HEK293 (cell line): ENCODE measurements at regions of chrX and their contacts with region 1.

Region 1: GRCh38 chrX:19017271-19017670 is 33.4 kb upstream of the PHKA2 start:
- H3K4me3 ChIP-seq: no peak overlapping the region
- H3K27ac ChIP-seq: no peak overlapping the region
- H3K4me1 ChIP-seq: no peaks in the 10 kb centered on the region
- CTCF ChIP-seq: peak; percentile 30

Region 2: DNA sequence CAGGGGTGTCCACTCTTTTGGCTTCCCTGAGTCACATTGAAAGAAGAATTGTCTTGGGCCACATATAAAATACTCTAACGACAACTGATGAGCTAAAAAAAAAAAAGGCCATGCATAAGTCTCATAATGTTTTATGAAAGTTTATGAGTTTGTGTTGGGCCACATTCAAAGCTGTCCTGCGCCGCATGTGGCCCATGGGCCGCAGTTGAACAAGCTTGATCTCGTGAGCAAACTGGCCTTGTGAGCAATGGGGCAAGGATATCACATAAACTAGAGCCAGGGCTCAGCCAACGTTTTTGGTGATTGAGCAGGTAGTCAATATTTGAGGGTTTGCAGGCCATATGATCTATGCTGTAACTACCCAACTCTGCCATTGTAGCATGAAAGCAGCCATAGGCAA is 11.3 kb after region 1 on chrX:
- CTCF ChIA-PET with region 1: interaction called, 18 read pairs
- POLR2A ChIA-PET with region 1: no interaction called
- H3K4me3 ChIP-seq: no peak overlapping the region
- H3K27ac ChIP-seq: no peak overlapping the region
- H3K4me1 ChIP-seq: no peaks in the 10 kb centered on the region
- CTCF ChIP-seq: no peak